Caco-2 (cell line): ENCODE measurements at regions of chr1 and their contacts with region 1.

Region 1: DNA sequence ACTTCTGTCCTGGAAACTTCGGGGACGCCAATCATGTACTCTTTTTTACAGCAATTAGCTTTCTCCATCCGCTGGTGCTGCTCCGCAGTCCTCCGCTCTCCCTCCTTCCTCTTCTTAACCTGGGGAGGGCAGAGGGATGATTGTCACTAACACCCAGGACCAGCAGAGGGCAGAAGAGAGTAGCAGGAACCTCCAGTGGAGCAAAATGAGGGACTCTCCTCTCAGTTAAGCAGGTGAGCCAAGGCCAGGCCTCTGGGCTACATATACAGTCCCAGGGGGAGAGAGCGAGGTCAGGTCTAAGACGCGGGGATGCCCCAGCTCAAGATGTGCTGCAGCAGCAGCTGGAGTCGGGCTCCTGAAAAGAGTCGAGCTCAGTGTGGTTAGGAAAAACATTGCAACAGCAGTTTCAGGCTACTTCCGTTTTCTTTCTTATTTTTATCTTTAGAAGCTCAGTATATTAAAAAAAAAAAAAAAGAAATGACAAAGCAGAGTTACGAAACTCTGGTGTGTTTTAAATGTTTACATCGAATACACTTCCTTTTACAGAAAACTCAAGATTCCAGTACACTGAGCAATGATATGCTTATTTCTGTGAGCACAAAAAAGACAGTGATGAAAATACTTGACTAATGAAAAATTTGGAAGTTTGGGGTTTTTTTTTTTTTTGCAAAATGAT is 25.7 kb upstream of the NLRP3 start:
- DNase-seq: peak; percentile 77 to 82
- H3K4me3 ChIP-seq: no peak overlapping the region
- H3K4me3 Mint-ChIP-seq: no peak overlapping the region
- H3K27ac Mint-ChIP-seq: no peak overlapping the region
- H3K4me1 ChIP-seq: no peaks in the 10 kb centered on the region
- H3K4me1 Mint-ChIP-seq: peaks cover 7% of the 10 kb centered on the region
- H3K27me3 ChIP-seq: no peaks in the 10 kb centered on the region; the same call in 1 of the 2 replicates
- H3K27me3 Mint-ChIP-seq: peaks cover 4% of the 10 kb centered on the region
- CTCF ChIP-seq: peak; percentile 77 to 90

Region 2: GRCh38 chr1:247378334-247379073 is 11.8 kb before region 1 on chr1:
- CTCF ChIA-PET with region 1: no interaction called
- POLR2A ChIA-PET with region 1: no interaction called
- intact Hi-C with region 1: no loop called
- DNase-seq: no peak
- H3K4me3 ChIP-seq: no peak overlapping the region
- H3K4me3 Mint-ChIP-seq: no peak overlapping the region
- H3K27ac Mint-ChIP-seq: no peak overlapping the region
- H3K4me1 ChIP-seq: no peaks in the 10 kb centered on the region
- H3K4me1 Mint-ChIP-seq: no peaks in the 10 kb centered on the region
- H3K27me3 ChIP-seq: no peaks in the 10 kb centered on the region
- H3K27me3 Mint-ChIP-seq: no peaks in the 10 kb centered on the region
- CTCF ChIP-seq: no peak

Region 3: DNA sequence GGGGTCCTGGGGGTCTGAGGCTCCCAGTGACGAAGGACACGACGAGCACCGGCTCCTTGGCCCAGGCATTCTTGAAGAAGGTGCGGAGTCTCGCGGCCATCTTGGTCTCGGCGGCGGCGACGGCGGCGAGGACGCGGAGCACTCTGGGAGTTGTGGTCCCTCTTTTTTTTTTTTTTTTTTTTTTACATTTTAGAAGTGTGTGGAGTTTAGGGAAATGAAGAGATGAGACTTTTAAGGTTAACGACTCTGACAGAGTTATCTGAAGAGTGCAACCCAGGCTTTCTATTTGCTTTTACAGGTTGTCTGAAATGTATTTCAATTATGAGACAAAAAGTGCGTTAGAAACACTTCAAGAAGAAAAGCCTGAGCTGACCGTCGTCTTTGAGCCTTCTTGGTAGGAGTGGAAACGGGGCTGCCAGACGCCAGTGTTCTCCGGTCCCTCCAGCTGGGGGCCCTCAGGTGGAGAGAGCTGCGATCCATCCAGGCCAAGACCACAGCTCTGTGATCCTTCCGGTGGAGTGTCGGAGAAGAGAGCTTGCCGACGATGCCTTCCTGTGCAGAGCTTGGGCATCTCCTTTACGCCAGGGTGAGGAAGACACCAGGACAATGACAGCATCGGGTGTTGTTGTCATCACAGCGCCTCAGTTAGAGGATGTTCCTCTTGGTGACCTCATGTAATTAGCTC is 58.0 kb after region 1 on chr1:
- CTCF ChIA-PET with region 1: no interaction called
- POLR2A ChIA-PET with region 1: no interaction called
- intact Hi-C with region 1: loop called (anchors 1 kb)
- DNase-seq: peak; percentile 73 to 80
- H3K4me3 ChIP-seq: peak overlapping the region; percentile 43
- H3K4me3 Mint-ChIP-seq: peak overlapping the region; percentile 72
- H3K27ac Mint-ChIP-seq: peak overlapping the region; percentile 74
- H3K4me1 ChIP-seq: no peaks in the 10 kb centered on the region
- H3K4me1 Mint-ChIP-seq: no peaks in the 10 kb centered on the region
- H3K27me3 ChIP-seq: no peaks in the 10 kb centered on the region
- H3K27me3 Mint-ChIP-seq: peaks cover 18% of the 10 kb centered on the region
- CTCF ChIP-seq: no peak

Region 4: DNA sequence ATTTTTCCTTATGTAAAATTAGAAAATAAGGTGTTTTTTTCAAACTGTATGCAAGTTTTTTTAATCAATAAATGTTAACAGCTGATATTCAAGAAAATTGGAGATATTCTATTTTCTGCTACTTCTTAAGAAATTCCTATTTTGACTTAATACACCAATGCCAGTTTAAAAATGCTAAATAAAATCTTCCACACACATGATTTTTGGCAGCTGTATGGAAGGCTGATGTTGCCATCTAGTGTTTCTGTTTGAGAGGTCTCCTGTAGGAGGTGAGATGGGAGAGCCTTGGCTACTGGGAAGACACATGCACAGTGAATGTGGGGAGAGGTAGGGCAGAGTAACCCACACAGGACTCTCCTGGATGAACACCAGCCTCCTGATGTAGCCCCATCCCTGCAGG is 96.8 kb after region 1 on chr1:
- CTCF ChIA-PET with region 1: interaction called, 4 read pairs
- POLR2A ChIA-PET with region 1: no interaction called
- intact Hi-C with region 1: loop called (anchors 1 kb)
- DNase-seq: peak in 1 of 2 experiments; percentile 35
- H3K4me3 ChIP-seq: no peak overlapping the region
- H3K4me3 Mint-ChIP-seq: no peak overlapping the region
- H3K27ac Mint-ChIP-seq: no peak overlapping the region
- H3K4me1 ChIP-seq: no peaks in the 10 kb centered on the region
- H3K4me1 Mint-ChIP-seq: no peaks in the 10 kb centered on the region
- H3K27me3 ChIP-seq: no peaks in the 10 kb centered on the region; the same call in 1 of the 2 replicates
- H3K27me3 Mint-ChIP-seq: peaks cover 18% of the 10 kb centered on the region
- CTCF ChIP-seq: peak; percentile 37 to 40

Region 5: DNA sequence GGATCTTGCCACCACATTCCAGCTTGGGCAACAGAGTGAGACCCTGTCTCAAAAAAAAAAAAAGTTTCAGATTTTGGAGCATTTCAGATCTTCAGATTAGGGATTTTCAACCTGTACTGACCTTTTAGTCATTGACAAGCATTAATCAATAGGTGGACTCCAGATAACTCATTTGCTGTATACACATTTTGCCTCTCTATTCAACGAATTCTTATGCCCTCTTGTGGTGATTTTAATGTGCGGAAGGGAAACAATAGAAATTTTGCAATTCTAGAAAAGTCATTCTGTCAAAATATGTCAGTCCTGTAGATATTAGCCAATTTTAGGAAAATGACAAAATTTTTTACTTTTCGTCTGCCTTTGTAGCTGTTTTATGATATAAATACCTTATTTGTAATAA is 186.2 kb after region 1 on chr1:
- CTCF ChIA-PET with region 1: interaction called, 4 read pairs
- POLR2A ChIA-PET with region 1: no interaction called
- intact Hi-C with region 1: loop called (anchors 1 kb)
- DNase-seq: peak in 1 of 2 experiments; percentile 12
- H3K4me3 ChIP-seq: no peak overlapping the region
- H3K4me3 Mint-ChIP-seq: no peak overlapping the region
- H3K27ac Mint-ChIP-seq: no peak overlapping the region
- H3K4me1 ChIP-seq: no peaks in the 10 kb centered on the region
- H3K4me1 Mint-ChIP-seq: no peaks in the 10 kb centered on the region
- H3K27me3 ChIP-seq: no peaks in the 10 kb centered on the region
- H3K27me3 Mint-ChIP-seq: peaks cover 2% of the 10 kb centered on the region
- CTCF ChIP-seq: peak; percentile 47 to 66